B cell (primary cell): ENCODE measurements at regions of chr10 and their contacts with region 1.

Region 1: GRCh38 chr10:71812016-71812912 is 38.8 kb downstream of the PSAP start:
- DNase-seq: peak; percentile 85
- ATAC-seq: peak; percentile 93
- H3K4me3 ChIP-seq: no peak overlapping the region
- H3K4me3 Mint-ChIP-seq: no peak overlapping the region
- H3K27ac ChIP-seq: no peak overlapping the region
- H3K27ac Mint-ChIP-seq: no peak overlapping the region
- H3K4me1 ChIP-seq: peaks cover 5 to 11% of the 10 kb centered on the region in 2 donors
- H3K4me1 Mint-ChIP-seq: peaks cover 6% of the 10 kb centered on the region
- H3K27me3 ChIP-seq: no peaks in the 10 kb centered on the region
- H3K27me3 Mint-ChIP-seq: peaks cover 4% of the 10 kb centered on the region
- CTCF ChIP-seq: peak; percentile 84

Region 2: DNA sequence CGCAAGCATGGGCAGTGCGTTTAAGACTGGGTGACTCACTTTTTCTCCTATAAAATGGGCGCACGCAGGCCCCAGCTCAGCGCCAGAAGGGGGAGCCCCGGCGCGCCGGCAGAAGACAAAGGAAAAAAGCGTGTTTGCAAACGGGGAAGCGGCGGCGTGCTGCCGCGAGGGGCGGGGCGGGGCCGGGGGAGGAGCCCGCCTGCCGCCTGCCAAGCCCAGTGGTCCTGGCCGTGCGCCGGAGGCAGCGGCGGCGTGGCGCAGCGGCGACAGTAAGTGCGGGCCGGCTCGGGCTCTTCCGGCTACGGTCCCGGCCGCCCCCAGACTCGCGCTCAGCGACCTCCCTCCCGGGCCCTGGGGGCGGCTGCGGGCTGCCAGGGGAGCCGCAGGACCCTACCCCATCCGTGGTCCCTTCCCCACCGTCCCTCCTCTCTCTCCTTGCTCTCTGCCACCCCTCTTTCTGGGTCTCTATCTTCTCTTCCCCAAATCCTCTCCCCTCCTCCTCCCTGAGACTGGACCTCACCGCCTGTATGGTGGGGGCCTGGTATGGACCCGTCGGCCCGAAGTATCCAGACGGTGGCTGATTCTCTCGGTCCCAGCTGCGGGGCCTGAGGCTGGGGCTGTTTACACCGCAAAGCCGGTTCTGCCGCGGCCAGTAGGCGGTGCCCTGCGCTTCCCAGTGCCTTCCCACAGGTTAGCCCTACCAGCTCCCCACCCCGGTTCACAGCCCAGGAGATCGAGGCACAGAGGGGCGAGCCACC is 493.0 kb before region 1 on chr10 and contains the start of gene SLC29A3:
- CTCF ChIA-PET with region 1: interaction called, 15 read pairs
- POLR2A ChIA-PET with region 1: no interaction called
- intact Hi-C with region 1: loop called (anchors 1 kb)
- DNase-seq: peak; percentile 88
- ATAC-seq: peak; percentile 90
- H3K4me3 ChIP-seq: peak within 1 kb of the TSS; percentile 34 to 84 (median 78)
- H3K4me3 Mint-ChIP-seq: peak within 1 kb of the TSS; percentile 99
- H3K27ac ChIP-seq: peak within 1 kb of the TSS in 1 of 2 donors; percentile 72
- H3K27ac Mint-ChIP-seq: peak within 1 kb of the TSS; percentile 94
- H3K4me1 ChIP-seq: peaks cover 8 to 18% of the 10 kb centered on the region in 2 donors
- H3K4me1 Mint-ChIP-seq: peaks cover 17% of the 10 kb centered on the region
- H3K27me3 ChIP-seq: no peaks in the 10 kb centered on the region
- H3K27me3 Mint-ChIP-seq: no peaks in the 10 kb centered on the region
- CTCF ChIP-seq: peak; percentile 71
- total RNA-seq, gene SLC29A3: 6.7 and 8.2 TPM in 2 replicates

Region 3: DNA sequence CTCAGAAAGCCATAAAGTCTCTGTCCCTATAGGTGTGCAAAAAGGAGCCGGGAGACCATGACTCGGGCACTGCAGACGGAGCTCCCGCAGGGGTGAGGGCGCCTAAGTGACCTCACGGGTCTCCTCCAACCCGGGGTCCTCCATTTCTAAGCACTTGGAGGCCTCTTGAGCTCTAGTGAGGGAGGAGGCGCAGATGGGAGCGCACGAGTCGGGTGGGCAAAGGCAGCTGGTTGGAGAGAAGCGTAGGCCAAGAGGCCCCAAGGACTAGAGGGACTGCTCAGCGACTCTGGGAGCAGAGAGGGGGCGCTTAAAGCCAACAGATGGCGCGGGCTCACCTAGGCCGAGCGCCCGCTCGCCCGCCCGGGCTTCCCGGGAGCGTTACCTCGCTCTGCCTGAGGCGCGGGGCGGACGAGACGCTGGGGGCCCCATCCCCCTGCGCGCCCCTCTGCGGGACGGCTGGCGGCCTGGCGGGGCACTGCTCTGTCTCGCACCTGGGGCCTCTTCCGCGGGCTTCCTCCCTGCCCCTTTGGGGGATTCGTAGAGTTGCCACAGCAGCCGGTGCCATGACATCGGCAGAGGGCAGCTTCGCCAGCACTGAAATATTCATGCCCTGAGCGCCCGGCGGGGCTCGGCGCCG is 416.1 kb before region 1 on chr10:
- CTCF ChIA-PET with region 1: interaction called, 10 read pairs
- POLR2A ChIA-PET with region 1: no interaction called
- intact Hi-C with region 1: no loop called
- DNase-seq: peak; percentile 68
- ATAC-seq: peak; percentile 66
- H3K4me3 ChIP-seq: peak overlapping the region in 4 of 5 experiments; percentile 24 to 58 (median 51)
- H3K4me3 Mint-ChIP-seq: peak overlapping the region; percentile 78
- H3K27ac ChIP-seq: no peak overlapping the region
- H3K27ac Mint-ChIP-seq: no peak overlapping the region
- H3K4me1 ChIP-seq: peaks cover 17% of the 10 kb centered on the region in 2 donors
- H3K4me1 Mint-ChIP-seq: peaks cover 11% of the 10 kb centered on the region
- H3K27me3 ChIP-seq: peaks cover 0 to 56% (median 22%) of the 10 kb centered on the region in 4 experiments
- H3K27me3 Mint-ChIP-seq: peaks cover 57% of the 10 kb centered on the region
- CTCF ChIP-seq: no peak

Region 4: GRCh38 chr10:71608819-71609768 is 203.2 kb before region 1 on chr10:
- CTCF ChIA-PET with region 1: interaction called, 4 read pairs
- POLR2A ChIA-PET with region 1: interaction called, 12 read pairs
- intact Hi-C with region 1: no loop called
- DNase-seq: peak; percentile 75
- ATAC-seq: no peak
- H3K4me3 ChIP-seq: no peak overlapping the region
- H3K4me3 Mint-ChIP-seq: no peak overlapping the region
- H3K27ac ChIP-seq: no peak overlapping the region
- H3K27ac Mint-ChIP-seq: no peak overlapping the region
- H3K4me1 ChIP-seq: no peaks in the 10 kb centered on the region
- H3K4me1 Mint-ChIP-seq: peaks cover 2% of the 10 kb centered on the region
- H3K27me3 ChIP-seq: peaks cover 0 to 15% (median 0%) of the 10 kb centered on the region in 4 experiments
- H3K27me3 Mint-ChIP-seq: peaks cover 10% of the 10 kb centered on the region
- CTCF ChIP-seq: peak; percentile 76

Region 5: GRCh38 chr10:71713135-71714030 is 98.9 kb before region 1 on chr10:
- CTCF ChIA-PET with region 1: interaction called, 52 read pairs
- POLR2A ChIA-PET with region 1: interaction called, 3 read pairs
- intact Hi-C with region 1: loop called (anchors 1 kb)
- DNase-seq: peak; percentile 41
- ATAC-seq: peak; percentile 41
- H3K4me3 ChIP-seq: no peak overlapping the region
- H3K4me3 Mint-ChIP-seq: peak overlapping the region; percentile 29
- H3K27ac ChIP-seq: no peak overlapping the region
- H3K27ac Mint-ChIP-seq: peak overlapping the region; percentile 83
- H3K4me1 ChIP-seq: peaks cover 35 to 46% of the 10 kb centered on the region in 2 donors
- H3K4me1 Mint-ChIP-seq: peaks cover 41% of the 10 kb centered on the region
- H3K27me3 ChIP-seq: no peaks in the 10 kb centered on the region
- H3K27me3 Mint-ChIP-seq: no peaks in the 10 kb centered on the region
- CTCF ChIP-seq: no peak

Region 6: DNA sequence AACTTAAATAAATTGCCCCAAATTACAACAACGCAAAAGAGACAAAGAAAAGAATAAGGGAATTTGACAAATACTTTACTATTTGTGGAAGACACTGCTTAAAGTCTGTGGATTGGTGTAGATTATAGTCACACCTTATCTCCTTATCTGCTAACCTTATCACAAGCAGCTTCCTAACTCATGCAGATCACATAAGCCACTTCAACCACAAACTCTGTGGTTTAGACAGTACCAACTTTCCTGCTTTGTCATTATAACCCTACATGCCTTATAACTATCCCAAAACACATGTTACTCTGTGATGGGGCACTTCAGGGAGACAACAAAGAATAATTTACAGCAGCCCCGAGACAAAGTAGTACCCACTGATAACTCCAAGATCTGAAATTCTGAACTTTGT is 1725.0 kb after region 1 on chr10:
- CTCF ChIA-PET with region 1: no interaction called
- POLR2A ChIA-PET with region 1: no interaction called
- intact Hi-C with region 1: no loop called
- DNase-seq: no peak
- ATAC-seq: no peak
- H3K4me3 ChIP-seq: no peak overlapping the region
- H3K4me3 Mint-ChIP-seq: no peak overlapping the region
- H3K27ac ChIP-seq: no peak overlapping the region
- H3K27ac Mint-ChIP-seq: no peak overlapping the region
- H3K4me1 ChIP-seq: no peaks in the 10 kb centered on the region
- H3K4me1 Mint-ChIP-seq: no peaks in the 10 kb centered on the region
- H3K27me3 ChIP-seq: no peaks in the 10 kb centered on the region
- H3K27me3 Mint-ChIP-seq: no peaks in the 10 kb centered on the region
- CTCF ChIP-seq: no peak